Activated CD4-positive, alpha-beta memory T cell treated with anti-CD3 and anti-CD28 coated beads, Interleukin-2, amount 10 ng/mL, durations not matched to agents 7 days and 5 days (primary cell): ENCODE measurements at regions of chr14 and their contacts with region 1.

Region 1: DNA sequence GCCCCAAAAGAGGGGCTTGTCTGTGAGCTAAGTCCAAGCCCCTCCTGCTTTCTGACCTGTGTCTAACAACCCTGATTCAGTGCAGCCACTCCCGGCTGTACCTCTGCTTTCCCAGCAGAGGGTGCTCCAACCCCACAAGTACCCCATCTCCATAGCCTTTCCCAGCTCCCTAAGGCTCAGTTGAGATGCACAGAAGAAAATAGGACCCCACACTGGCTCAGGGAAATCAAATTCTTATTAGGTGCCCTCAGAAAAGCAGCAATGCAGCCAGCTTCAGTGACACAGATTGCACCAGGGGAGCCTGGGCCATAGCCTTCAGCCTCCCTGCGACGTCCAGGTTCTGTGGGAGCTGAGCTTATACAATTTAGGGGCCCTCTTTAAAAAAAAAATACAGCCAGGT is 49.9 kb downstream of the LRRC74A start:
- DNase-seq: peak; percentile 57
- H3K4me3 Mint-ChIP-seq: no peak overlapping the region
- H3K27ac Mint-ChIP-seq: no peak overlapping the region
- H3K4me1 Mint-ChIP-seq: no peaks in the 10 kb centered on the region
- H3K27me3 Mint-ChIP-seq: peaks cover 4% of the 10 kb centered on the region

Region 2: DNA sequence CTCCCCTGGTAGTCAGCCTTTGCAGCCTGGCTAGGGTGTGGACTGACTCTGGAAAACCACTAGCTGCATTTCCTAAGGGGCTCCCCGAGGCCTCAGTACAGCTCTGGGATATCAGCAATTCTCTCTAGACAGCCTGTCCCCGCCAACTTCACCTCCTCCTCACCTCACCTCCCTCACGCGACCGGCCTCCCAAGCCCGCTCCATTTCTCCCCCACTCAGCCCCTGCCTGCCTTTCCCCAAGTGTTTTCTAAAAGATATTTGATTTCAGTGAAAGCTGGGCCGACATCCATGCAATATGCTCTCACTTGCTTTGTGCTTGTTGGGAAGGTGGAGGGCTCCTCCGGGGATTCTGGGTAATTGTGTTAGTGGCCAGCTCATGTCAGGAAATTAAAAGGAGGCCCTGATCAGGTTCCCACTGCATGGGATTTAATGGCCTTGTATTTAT is 408.3 kb before region 1 on chr14:
- CTCF ChIA-PET with region 1: no interaction called
- POLR2A ChIA-PET with region 1: no interaction called
- DNase-seq: no peak
- H3K4me3 Mint-ChIP-seq: no peak overlapping the region
- H3K27ac Mint-ChIP-seq: no peak overlapping the region
- H3K4me1 Mint-ChIP-seq: no peaks in the 10 kb centered on the region
- H3K27me3 Mint-ChIP-seq: peaks cover 18% of the 10 kb centered on the region

Region 3: DNA sequence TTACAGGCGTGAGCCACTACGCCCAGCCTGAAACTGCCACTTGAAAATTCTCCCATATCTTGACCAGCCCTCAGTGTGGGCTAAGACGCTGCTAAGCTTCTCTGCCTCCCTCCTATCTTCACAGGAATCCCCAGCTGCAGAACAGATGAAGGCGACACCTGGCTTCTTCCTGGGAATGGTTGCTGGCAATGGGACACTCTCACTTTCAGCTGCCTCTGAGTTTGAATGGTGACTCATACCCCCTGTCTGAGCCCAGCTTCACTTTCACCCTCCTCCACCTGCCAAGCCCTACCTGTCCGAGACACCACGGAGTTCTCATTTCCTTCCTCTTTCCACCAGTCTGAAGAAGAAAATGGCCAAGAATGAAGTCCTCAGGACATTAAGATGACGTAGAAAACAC is 133.1 kb before region 1 on chr14:
- CTCF ChIA-PET with region 1: no interaction called
- POLR2A ChIA-PET with region 1: no interaction called
- DNase-seq: no peak
- H3K4me3 Mint-ChIP-seq: no peak overlapping the region
- H3K27ac Mint-ChIP-seq: no peak overlapping the region
- H3K4me1 Mint-ChIP-seq: no peaks in the 10 kb centered on the region
- H3K27me3 Mint-ChIP-seq: peaks cover 43% of the 10 kb centered on the region

Region 4: DNA sequence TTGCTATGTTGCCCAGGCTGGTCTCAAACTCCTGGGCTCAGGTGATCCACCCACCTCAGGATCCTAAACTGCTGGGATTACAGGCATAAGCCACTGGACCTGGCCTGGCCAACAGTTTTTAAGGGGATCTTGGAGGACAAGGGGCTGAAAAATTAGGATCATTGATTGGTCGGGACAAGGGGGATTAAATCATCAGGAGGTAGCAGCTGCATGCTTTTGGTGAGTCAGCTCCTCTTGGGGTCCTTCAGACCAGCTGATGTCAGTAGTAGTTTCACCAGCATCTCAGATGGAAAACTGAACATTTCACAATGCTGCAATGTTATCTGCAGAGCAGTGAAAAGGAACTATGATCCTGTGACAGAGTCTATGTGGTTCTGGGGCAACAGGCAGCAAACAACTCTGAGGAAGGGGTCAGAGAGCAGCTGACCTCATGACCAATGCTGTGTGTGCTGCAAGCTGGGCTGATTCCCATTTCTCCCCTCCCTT is 43.5 kb before region 1 on chr14:
- CTCF ChIA-PET with region 1: no interaction called
- POLR2A ChIA-PET with region 1: no interaction called
- DNase-seq: no peak
- H3K4me3 Mint-ChIP-seq: no peak overlapping the region
- H3K27ac Mint-ChIP-seq: no peak overlapping the region
- H3K4me1 Mint-ChIP-seq: no peaks in the 10 kb centered on the region
- H3K27me3 Mint-ChIP-seq: peaks cover 10% of the 10 kb centered on the region

Region 5: DNA sequence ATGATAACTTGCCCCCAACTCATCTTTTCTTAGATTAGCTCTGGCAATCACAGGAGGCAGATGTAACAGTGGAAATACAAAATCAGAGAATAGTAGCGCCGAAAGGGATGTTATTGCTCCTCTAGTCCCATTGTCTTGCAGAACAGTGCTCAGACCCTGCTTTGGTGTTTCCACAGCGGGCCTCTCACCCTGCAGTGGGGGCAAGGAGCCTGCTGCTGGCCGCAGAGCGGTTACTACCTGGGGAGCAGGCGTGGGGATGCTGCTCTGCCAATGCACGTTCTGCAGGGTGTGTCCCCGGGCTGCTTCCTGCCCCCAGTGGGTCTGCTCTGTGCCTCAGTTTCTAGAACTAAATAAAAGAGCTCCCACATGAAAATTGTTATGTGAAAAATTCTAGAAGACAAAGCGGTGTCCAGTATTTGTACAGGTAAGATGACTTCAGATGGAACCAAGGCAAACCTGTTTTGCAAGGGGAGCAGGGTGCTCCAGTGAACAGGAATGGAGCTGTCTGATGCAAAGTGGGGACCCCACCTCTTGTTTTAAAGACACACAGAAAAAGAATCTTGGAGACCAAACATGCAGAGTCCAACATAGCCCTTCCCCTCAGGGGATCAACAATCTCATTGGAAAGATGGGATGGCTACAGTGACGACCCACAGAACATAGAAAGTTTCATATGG is 14.4 kb before region 1 on chr14:
- CTCF ChIA-PET with region 1: interaction called, 13 read pairs
- POLR2A ChIA-PET with region 1: no interaction called
- DNase-seq: no peak
- H3K4me3 Mint-ChIP-seq: no peak overlapping the region
- H3K27ac Mint-ChIP-seq: no peak overlapping the region
- H3K4me1 Mint-ChIP-seq: peaks cover 10% of the 10 kb centered on the region
- H3K27me3 Mint-ChIP-seq: peaks cover 28% of the 10 kb centered on the region

Region 6: GRCh38 chr14:77053046-77053841 is 177.2 kb after region 1 on chr14:
- CTCF ChIA-PET with region 1: interaction called, 33 read pairs
- POLR2A ChIA-PET with region 1: no interaction called
- DNase-seq: peak; percentile 71
- H3K4me3 Mint-ChIP-seq: no peak overlapping the region
- H3K27ac Mint-ChIP-seq: no peak overlapping the region
- H3K4me1 Mint-ChIP-seq: peaks cover 24% of the 10 kb centered on the region
- H3K27me3 Mint-ChIP-seq: peaks cover 2% of the 10 kb centered on the region

Region 7: GRCh38 chr14:77059276-77059915 is 183.3 kb after region 1 on chr14:
- CTCF ChIA-PET with region 1: interaction called, 436 read pairs
- POLR2A ChIA-PET with region 1: no interaction called
- DNase-seq: peak; percentile 47
- H3K4me3 Mint-ChIP-seq: no peak overlapping the region
- H3K27ac Mint-ChIP-seq: no peak overlapping the region
- H3K4me1 Mint-ChIP-seq: peaks cover 17% of the 10 kb centered on the region
- H3K27me3 Mint-ChIP-seq: no peaks in the 10 kb centered on the region

Region 8: GRCh38 chr14:77086017-77086736 is 210.1 kb after region 1 on chr14:
- CTCF ChIA-PET with region 1: interaction called, 145 read pairs
- POLR2A ChIA-PET with region 1: no interaction called
- DNase-seq: no peak
- H3K4me3 Mint-ChIP-seq: no peak overlapping the region
- H3K27ac Mint-ChIP-seq: no peak overlapping the region
- H3K4me1 Mint-ChIP-seq: peaks cover 9% of the 10 kb centered on the region
- H3K27me3 Mint-ChIP-seq: peaks cover 3% of the 10 kb centered on the region

Region 9: DNA sequence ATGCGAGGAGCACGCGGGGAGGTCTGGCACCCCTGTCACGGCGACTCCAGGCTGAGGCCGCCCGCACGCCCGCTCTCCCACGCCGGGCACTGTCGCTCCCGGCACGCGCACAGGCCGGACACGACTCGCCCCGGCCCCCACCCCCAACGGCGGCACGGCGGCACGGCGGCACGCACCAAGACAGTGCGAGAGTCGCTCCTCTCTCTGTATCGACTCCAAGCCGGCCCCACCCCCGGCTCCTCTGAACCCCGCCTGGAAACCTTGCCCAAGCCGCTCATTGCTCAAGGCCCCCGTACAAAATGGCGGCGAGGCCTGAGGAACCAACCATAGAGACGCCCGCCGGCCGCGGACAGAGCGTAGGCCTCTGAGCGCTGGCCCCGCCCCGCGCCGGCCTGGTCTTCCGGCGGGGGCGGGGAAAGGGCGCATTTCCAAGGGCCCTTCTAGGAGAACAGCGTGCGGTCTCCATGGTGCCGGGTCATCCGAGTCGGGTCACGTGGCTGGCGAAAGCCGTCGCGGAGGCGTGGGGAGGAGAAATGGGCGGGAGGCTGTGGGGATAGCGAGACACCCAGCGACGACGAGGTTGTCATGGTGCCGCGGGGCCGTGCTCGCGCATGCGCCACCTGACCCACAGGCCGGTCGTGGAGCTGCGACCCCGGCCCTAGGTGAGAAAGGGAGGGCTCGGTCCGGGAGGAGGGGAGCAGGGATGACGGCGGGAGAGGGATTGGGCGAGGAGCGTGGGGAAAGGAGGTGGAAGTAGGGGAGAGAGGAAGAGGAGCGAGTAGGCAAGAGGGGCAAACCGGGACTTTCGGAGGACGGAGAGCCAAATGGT is 221.8 kb after region 1 on chr14 and contains the start of gene CIPC:
- CTCF ChIA-PET with region 1: interaction called, 145 read pairs
- POLR2A ChIA-PET with region 1: interaction called, 3 read pairs
- DNase-seq: peak; percentile 100
- H3K4me3 Mint-ChIP-seq: peak within 1 kb of the TSS; percentile 94
- H3K27ac Mint-ChIP-seq: peak within 1 kb of the TSS; percentile 91
- H3K4me1 Mint-ChIP-seq: peaks cover 38% of the 10 kb centered on the region
- H3K27me3 Mint-ChIP-seq: peaks cover 3% of the 10 kb centered on the region
- total RNA-seq, gene CIPC: 9.6 to 12.8 TPM

Region 10: GRCh38 chr14:77124345-77125280 is 248.5 kb after region 1 on chr14:
- CTCF ChIA-PET with region 1: interaction called, 10 read pairs
- POLR2A ChIA-PET with region 1: no interaction called
- DNase-seq: peak; percentile 76
- H3K4me3 Mint-ChIP-seq: peak overlapping the region; percentile 76
- H3K27ac Mint-ChIP-seq: no peak overlapping the region
- H3K4me1 Mint-ChIP-seq: peaks cover 43% of the 10 kb centered on the region
- H3K27me3 Mint-ChIP-seq: peaks cover 40% of the 10 kb centered on the region